ENCODE measurements at regions of chr2 and their contacts with region 1.

Region 1: DNA sequence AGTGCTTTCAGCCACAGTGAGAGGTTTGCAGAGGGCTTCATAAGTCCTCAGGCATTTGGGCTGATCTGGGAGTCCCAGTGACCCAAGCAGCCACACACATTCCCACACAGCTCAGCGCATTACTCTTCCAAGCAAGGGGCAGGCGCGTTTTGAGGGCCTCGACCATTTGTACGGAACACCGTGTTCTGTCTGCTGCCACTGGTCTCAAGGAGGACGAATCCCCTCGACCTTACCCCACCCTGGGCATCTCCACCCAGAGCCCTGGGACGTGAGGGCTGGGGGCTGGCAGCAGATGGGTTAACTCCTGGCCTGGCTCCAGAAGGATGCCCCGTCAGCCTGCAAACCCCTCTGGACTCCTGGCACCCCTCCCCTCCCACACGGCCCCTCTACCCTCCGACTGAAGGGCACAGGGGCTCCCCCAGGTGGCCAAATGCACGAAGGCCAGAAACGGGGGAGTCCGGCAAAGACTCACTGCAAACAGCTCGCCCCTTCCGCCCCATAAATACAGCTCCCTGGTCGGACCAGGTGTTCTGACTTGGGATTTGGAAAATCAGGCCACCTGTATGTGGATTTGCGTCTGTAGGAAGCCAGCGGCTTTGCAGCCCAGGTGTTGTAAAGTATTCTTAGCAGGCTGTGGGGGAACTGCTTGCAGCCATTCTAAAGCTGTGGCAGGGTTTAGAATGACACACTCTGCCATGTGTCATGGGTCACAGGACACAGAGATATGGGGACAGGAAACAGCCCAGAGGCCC is 33.6 kb upstream of the PTMA start:
- DNase-seq: peak; percentile 81
- ATAC-seq: peak; percentile 84
- H3K4me3 Mint-ChIP-seq: no peak overlapping the region
- H3K27ac Mint-ChIP-seq: no peak overlapping the region
- H3K4me1 Mint-ChIP-seq: peaks cover 10% of the 10 kb centered on the region
- H3K27me3 Mint-ChIP-seq: no peaks in the 10 kb centered on the region

Region 2: DNA sequence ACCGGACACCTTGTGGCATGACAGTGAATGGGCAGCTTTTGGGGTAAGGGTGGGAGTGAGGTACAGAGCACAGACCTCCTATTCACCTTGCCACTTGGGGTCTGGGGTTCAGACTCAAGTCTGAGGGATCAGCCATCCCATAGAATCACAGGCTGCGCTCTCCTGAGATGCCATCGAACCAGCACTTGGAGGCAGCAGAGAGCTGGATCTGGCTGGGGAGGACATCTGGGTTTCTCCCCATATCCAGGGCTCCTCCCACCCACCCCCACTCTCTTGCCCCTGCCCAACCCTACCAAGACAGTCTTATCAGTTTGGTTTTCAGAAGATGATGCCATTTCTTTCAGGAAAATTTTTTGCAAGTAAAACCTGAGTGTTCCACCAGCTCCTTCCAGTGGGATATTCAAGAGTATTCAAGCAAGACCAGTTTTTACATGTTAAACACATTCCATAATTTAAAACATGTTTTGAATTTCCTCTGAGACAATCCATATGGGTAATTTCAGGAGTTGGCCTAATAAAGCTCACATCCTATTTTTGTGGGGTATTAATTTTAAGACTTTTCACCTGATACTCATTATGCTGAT is 111.3 kb before region 1 on chr2:
- CTCF ChIA-PET with region 1: interaction called, 6 read pairs
- POLR2A ChIA-PET with region 1: no interaction called
- intact Hi-C with region 1: loop called in 1 of 2 experiments (anchors 1 kb)
- DNase-seq: peak; percentile 79
- ATAC-seq: peak; percentile 99
- H3K4me3 Mint-ChIP-seq: no peak overlapping the region
- H3K27ac Mint-ChIP-seq: no peak overlapping the region
- H3K4me1 Mint-ChIP-seq: peaks cover 2% of the 10 kb centered on the region
- H3K27me3 Mint-ChIP-seq: no peaks in the 10 kb centered on the region

Region 3: DNA sequence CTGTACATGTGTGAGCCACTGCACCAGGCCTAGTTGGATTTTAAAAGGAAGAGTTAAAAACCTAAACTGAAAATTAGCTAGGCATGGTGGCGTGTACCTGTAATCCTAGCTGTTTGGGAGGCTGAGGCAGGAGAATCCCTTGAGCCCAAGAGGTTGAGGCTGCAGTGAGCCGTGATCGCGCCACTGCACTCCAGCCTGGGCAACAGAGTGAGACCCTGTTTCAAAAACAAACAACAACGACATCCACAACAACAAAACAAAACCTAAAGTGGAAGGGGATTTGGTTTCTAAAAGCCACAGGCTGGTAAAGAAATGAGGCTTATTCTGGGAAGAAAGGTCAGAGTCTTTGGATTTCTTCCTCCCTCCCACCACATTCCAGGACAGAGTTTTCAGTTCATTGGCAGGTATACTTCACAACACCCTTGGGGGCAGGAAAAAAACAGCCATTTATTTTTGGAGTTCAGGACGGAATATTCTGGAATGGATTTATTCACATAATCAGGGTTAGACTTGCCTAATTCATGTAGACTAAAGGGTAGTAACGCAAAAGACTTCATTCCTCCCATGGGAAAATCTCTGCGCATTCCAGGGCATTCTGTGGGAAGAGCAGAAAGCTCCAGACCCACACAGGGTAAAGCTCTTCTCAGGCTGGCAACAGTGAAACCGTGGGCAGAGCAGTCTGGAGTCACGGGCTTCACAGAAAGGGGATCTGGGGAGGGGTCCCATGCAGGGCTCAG is 47.2 kb before region 1 on chr2:
- CTCF ChIA-PET with region 1: interaction called, 11 read pairs
- POLR2A ChIA-PET with region 1: no interaction called
- intact Hi-C with region 1: no loop called
- DNase-seq: no peak
- ATAC-seq: no peak
- H3K4me3 Mint-ChIP-seq: no peak overlapping the region
- H3K27ac Mint-ChIP-seq: peak overlapping the region; percentile 37
- H3K4me1 Mint-ChIP-seq: peaks cover 11% of the 10 kb centered on the region
- H3K27me3 Mint-ChIP-seq: no peaks in the 10 kb centered on the region

Region 4: GRCh38 chr2:231662028-231662810 is 12.5 kb before region 1 on chr2:
- CTCF ChIA-PET with region 1: interaction called, 90 read pairs
- POLR2A ChIA-PET with region 1: no interaction called
- intact Hi-C with region 1: loop called in 1 of 2 experiments (anchors 1 kb)
- DNase-seq: peak; percentile 98
- ATAC-seq: peak; percentile 92
- H3K4me3 Mint-ChIP-seq: peak overlapping the region; percentile 72
- H3K27ac Mint-ChIP-seq: peak overlapping the region; percentile 96
- H3K4me1 Mint-ChIP-seq: peaks cover 23% of the 10 kb centered on the region
- H3K27me3 Mint-ChIP-seq: no peaks in the 10 kb centered on the region

Region 5: GRCh38 chr2:231701456-231702373 is 27.0 kb after region 1 on chr2:
- CTCF ChIA-PET with region 1: interaction called, 28 read pairs
- POLR2A ChIA-PET with region 1: interaction called, 8 read pairs
- intact Hi-C with region 1: no loop called
- DNase-seq: no peak
- ATAC-seq: no peak
- H3K4me3 Mint-ChIP-seq: no peak overlapping the region
- H3K27ac Mint-ChIP-seq: no peak overlapping the region
- H3K4me1 Mint-ChIP-seq: peaks cover 10% of the 10 kb centered on the region
- H3K27me3 Mint-ChIP-seq: no peaks in the 10 kb centered on the region

Region 6: DNA sequence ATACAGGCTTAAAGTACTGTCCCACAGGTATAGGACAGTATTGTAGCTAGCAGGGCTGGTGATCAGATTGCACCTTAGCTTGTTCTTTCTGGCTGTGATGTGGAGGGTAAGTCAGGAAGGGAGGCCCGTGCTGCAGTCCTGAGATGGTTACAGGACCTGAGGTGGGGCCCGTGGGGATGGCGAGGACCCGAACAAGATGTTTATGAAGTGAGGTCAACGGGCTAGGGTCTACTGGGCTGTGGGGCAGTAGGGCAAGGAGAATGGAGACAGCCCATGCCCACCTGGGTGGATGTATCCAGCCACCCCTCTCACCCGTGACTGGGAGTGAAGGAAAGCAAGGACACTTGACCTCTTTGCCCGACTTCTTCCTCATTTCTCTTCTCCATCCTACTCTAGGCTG is 51.5 kb after region 1 on chr2:
- CTCF ChIA-PET with region 1: interaction called, 10 read pairs
- POLR2A ChIA-PET with region 1: no interaction called
- intact Hi-C with region 1: no loop called
- DNase-seq: no peak
- ATAC-seq: no peak
- H3K4me3 Mint-ChIP-seq: no peak overlapping the region
- H3K27ac Mint-ChIP-seq: no peak overlapping the region
- H3K4me1 Mint-ChIP-seq: no peaks in the 10 kb centered on the region
- H3K27me3 Mint-ChIP-seq: no peaks in the 10 kb centered on the region